ENCODE measurements at regions of chr17 and their contacts with region 1.

Region 1: GRCh38 chr17:78708510-78708973 is 73.5 kb downstream of the CYTH1 start:
- DNase-seq: peak; percentile 63 to 85 (median 81)
- H3K4me3 ChIP-seq: no peak overlapping the region
- H3K27ac ChIP-seq: no peak overlapping the region
- H3K4me1 ChIP-seq: peaks cover 0 to 7% (median 0%) of the 10 kb centered on the region in 4 experiments
- H3K27me3 ChIP-seq: no peaks in the 10 kb centered on the region

Region 2: DNA sequence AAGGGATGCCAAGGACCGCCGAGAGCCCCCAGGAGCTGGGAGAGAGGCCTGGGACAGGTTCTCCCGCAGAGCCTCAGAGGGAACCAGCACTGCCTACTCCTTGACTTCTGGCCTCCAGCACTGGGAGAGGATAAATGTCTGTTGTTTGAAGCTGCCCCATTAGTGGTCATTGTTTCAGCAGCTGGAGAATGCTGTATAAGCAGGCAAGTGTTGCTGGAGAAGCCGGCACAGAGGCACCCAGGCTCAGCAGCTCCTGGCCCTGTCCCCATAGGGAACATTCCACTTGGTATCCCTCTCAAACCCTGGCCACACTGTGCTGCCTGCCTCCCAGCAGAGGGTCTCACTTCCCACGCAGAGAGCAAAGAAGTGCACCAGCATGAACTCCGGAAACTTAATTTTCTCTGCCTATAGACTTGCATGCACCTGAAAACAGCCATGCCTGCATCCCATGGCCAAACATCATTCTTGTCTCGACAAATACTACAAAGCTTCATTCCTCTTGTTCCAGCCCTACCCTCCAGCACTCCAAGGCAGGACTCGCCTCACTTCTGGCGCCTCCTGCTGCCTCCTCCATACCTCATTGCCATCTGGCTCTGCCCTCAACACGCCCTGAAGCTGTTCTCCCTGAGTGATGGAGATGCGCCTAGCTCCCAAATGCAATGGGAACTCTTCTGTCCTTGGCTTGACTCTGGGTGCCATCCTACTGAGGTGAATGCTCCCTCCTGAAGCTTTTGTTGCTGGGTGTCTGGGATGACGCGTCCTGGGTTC is 219.5 kb before region 1 on chr17:
- CTCF ChIA-PET with region 1: interaction called, 10 read pairs
- POLR2A ChIA-PET with region 1: no interaction called
- DNase-seq: no peak
- H3K4me3 ChIP-seq: no peak overlapping the region
- H3K27ac ChIP-seq: no peak overlapping the region
- H3K4me1 ChIP-seq: peaks cover 0 to 11% (median 6%) of the 10 kb centered on the region in 4 experiments
- H3K27me3 ChIP-seq: peaks cover 0 to 5% (median 0%) of the 10 kb centered on the region in 5 experiments

Region 3: DNA sequence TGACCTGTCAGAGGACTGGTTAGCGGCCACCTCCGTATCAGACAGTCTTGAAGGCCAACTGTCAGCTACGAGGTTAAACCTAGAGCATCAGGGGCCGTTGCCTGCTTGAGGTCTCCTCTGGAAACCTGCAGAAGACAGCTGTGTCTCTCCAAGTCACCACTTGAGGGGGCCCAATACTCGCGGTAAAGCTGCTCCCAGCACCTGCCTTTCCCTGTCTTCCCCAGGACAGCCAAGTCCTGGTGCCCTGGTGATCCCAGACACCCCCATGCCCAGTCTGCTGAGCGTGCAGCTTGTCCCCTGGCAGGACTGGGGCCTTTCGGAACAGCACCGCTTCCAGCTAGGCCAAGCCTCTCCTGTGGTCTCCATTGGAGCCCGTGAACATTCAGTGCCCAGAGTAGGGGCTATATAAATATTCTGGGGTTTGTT is 211.4 kb before region 1 on chr17:
- CTCF ChIA-PET with region 1: interaction called, 57 read pairs
- POLR2A ChIA-PET with region 1: no interaction called
- DNase-seq: peak; percentile 60 to 74 (median 70)
- H3K4me3 ChIP-seq: no peak overlapping the region
- H3K27ac ChIP-seq: no peak overlapping the region
- H3K4me1 ChIP-seq: no peaks in the 10 kb centered on the region
- H3K27me3 ChIP-seq: peaks cover 0 to 2% (median 0%) of the 10 kb centered on the region in 5 experiments

Region 4: GRCh38 chr17:78645421-78646295 is 62.9 kb before region 1 on chr17:
- CTCF ChIA-PET with region 1: no interaction called
- POLR2A ChIA-PET with region 1: no interaction called
- DNase-seq: peak; percentile 53 to 80 (median 75)
- H3K4me3 ChIP-seq: peak overlapping the region in 3 of 7 experiments; percentile 19 to 48 (median 33)
- H3K27ac ChIP-seq: no peak overlapping the region
- H3K4me1 ChIP-seq: peaks cover 0 to 16% (median 11%) of the 10 kb centered on the region in 4 experiments
- H3K27me3 ChIP-seq: no peaks in the 10 kb centered on the region

Region 5: DNA sequence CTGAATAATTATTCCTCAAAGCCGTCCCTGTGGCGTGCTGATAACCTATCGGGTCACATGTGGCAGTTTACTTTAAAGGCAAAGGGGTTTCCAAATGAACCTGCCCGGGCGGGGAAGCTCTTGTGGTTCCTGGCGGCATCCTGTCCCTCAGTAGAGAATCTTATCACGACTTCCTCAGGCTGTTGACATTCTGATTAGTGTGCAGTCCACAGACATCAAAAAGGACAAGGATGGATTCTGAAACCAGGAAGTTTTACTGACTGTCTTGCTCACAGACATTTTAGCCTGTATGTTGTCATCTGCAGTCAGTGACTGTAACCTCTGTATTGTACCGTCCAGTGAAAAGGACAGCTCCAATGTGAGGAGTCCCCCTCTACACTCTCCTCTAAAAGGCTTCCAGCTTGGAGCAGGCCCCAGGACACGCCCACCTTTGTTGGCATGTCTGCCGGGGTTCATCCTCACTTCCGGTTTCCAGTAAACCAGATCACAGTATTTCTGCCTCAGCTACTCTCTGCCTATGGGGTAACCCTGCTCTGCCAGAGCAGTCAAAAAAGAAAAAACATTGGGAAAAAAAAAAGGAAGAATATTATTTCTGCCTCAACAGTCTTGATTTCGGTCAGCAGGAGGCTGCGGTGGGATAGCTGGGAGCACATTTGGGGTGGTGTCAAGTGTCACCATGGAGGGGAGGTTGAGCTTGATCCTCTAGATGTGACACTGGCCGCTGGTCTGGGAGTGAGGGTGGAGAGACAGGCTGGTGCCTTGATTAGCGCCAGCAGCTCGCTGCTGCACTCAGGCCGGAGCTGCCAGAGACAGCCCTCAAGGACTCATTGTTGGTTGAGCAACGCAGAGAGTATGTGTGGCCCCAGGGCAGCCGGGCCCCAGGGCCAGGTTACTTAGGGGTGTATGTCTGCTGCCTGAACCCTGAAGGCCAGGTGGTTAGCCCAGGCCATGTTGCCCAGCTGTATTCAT is 42.3 kb before region 1 on chr17:
- CTCF ChIA-PET with region 1: interaction called, 18 read pairs
- POLR2A ChIA-PET with region 1: no interaction called
- DNase-seq: peak; percentile 95 to 99 (median 97)
- H3K4me3 ChIP-seq: peak overlapping the region in 3 of 7 experiments; percentile 0 to 61 (median 34)
- H3K27ac ChIP-seq: peak overlapping the region in 1 of 2 experiments; percentile 50
- H3K4me1 ChIP-seq: peaks cover 11 to 33% (median 30%) of the 10 kb centered on the region in 4 experiments
- H3K27me3 ChIP-seq: no peaks in the 10 kb centered on the region

Region 6: GRCh38 chr17:78723001-78723796 is 14.7 kb after region 1 on chr17:
- CTCF ChIA-PET with region 1: interaction called, 22 read pairs
- POLR2A ChIA-PET with region 1: interaction called, 4 read pairs
- DNase-seq: no peak
- H3K4me3 ChIP-seq: no peak overlapping the region
- H3K27ac ChIP-seq: no peak overlapping the region
- H3K4me1 ChIP-seq: peaks cover 25 to 82% (median 70%) of the 10 kb centered on the region in 4 experiments
- H3K27me3 ChIP-seq: no peaks in the 10 kb centered on the region

Region 7: GRCh38 chr17:78736526-78737079 is 28.1 kb after region 1 on chr17:
- CTCF ChIA-PET with region 1: interaction called, 32 read pairs
- POLR2A ChIA-PET with region 1: no interaction called
- DNase-seq: peak; percentile 65 to 91 (median 84)
- H3K4me3 ChIP-seq: peak overlapping the region; percentile 37 to 86 (median 78)
- H3K27ac ChIP-seq: peak overlapping the region; percentile 41 to 81
- H3K4me1 ChIP-seq: peaks cover 32 to 74% (median 50%) of the 10 kb centered on the region in 4 experiments
- H3K27me3 ChIP-seq: no peaks in the 10 kb centered on the region